ENCODE measurements at regions of chr3 and their contacts with region 1.

Region 1: DNA sequence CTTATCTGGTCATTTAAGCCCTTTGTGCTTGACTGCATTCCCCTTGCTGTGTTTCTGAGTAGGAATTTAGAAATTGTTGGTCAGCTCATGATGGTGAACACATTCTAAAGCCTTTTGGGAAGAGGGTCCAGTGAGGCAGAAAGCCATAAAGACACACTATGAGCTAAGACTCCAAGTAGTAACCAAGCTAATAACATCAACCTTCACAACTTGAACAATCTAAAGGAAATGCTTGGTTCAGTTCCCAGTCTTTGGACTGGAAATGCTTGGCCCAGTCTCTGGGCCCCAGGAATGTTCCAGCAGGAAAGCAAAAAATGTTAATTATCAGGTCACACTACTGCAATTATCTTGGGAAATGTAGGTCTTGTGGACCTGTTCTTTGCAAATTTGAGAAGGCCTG is 7.7 kb downstream of the PLSCR1 start:
- DNase-seq: no peak
- ATAC-seq: no peak
- H3K4me3 ChIP-seq: no peak overlapping the region
- H3K4me3 Mint-ChIP-seq: no peak overlapping the region
- H3K27ac ChIP-seq: no peak overlapping the region
- H3K27ac Mint-ChIP-seq: no peak overlapping the region
- H3K4me1 ChIP-seq: peaks cover 9 to 12% of the 10 kb centered on the region in 2 donors
- H3K4me1 Mint-ChIP-seq: peaks cover 17 to 60% (median 31%) of the 10 kb centered on the region in 7 donors
- H3K27me3 ChIP-seq: no peaks in the 10 kb centered on the region
- H3K27me3 Mint-ChIP-seq: no peaks in the 10 kb centered on the region

Region 2: DNA sequence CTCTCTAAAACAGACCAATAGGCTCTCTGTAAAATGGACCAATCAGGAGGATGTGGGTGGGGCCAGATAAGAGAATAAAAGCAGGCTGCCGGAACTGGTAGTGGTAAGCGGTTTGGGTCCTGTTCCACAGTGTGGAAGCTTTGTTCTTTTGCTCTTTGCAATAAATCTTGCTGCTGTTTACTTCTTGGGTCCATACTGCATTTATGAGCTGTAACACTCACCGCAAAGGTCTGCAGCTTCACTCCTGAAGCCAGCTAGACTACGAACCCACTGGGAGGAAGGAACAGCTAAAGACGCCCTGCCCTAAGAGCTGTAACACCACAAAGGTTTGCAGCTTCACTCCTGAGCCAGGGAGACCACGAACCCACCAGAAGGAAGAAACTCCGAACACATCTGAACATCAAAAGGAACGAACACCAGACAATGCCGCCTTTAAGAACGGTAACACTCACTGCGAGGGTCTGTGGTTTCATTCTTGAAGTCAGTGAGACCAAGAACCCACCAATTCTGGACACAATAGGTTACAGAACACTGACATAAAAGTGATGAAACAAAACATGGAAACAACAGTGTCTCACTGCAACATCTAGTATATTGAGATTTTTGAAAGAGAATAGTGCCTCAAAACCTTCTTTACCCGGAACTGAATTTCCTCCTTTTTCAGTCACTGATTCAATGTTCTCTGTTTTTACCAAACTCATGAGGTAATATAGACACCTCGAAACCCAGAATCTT is 38.5 kb before region 1 on chr3:
- CTCF ChIA-PET with region 1: no interaction called
- POLR2A ChIA-PET with region 1: no interaction called
- intact Hi-C with region 1: loop called (anchors 2 to 5 kb)
- DNase-seq: peak in 7 of 9 donors; percentile 48 to 74 (median 60)
- ATAC-seq: peak; percentile 67
- H3K4me3 ChIP-seq: peak overlapping the region; percentile 43
- H3K4me3 Mint-ChIP-seq: peak overlapping the region; percentile 77 to 95 (median 85)
- H3K27ac ChIP-seq: peak overlapping the region; percentile 39
- H3K27ac Mint-ChIP-seq: peak overlapping the region; percentile 79 to 95 (median 82)
- H3K4me1 ChIP-seq: no peaks in the 10 kb centered on the region
- H3K4me1 Mint-ChIP-seq: peaks cover 0 to 22% (median 18%) of the 10 kb centered on the region in 7 donors
- H3K27me3 ChIP-seq: no peaks in the 10 kb centered on the region
- H3K27me3 Mint-ChIP-seq: peaks cover 0 to 5% (median under 1%) of the 10 kb centered on the region in 5 donors

Region 3: GRCh38 chr3:146521394-146521793 is 15.3 kb before region 1 on chr3:
- CTCF ChIA-PET with region 1: no interaction called
- POLR2A ChIA-PET with region 1: no interaction called
- intact Hi-C with region 1: loop called in 1 of 2 experiments (anchors 2 kb)
- DNase-seq: no peak
- ATAC-seq: no peak
- H3K4me3 ChIP-seq: no peak overlapping the region
- H3K4me3 Mint-ChIP-seq: no peak overlapping the region
- H3K27ac ChIP-seq: no peak overlapping the region
- H3K27ac Mint-ChIP-seq: no peak overlapping the region
- H3K4me1 ChIP-seq: no peaks in the 10 kb centered on the region
- H3K4me1 Mint-ChIP-seq: peaks cover 0 to 17% (median 0%) of the 10 kb centered on the region in 7 donors
- H3K27me3 ChIP-seq: no peaks in the 10 kb centered on the region
- H3K27me3 Mint-ChIP-seq: no peaks in the 10 kb centered on the region

Measured in naive thymus-derived CD4-positive, alpha-beta T cell (primary cell).